GM12878 (cell line): ENCODE measurements at regions of chr17 and their contacts with region 1.

Region 1: GRCh38 chr17:82320956-82321927 is 3.8 kb upstream of the CD7 start:
- DNase-seq: no peak
- ATAC-seq: peak; percentile 88
- H3K4me3 ChIP-seq: peak overlapping the region; percentile 41; the same call in 1 of the 2 replicates
- H3K27ac ChIP-seq: no peak overlapping the region
- H3K4me1 ChIP-seq: no peaks in the 10 kb centered on the region; the same call in 1 of the 2 replicates
- H3K27me3 ChIP-seq: no peaks in the 10 kb centered on the region; a peak in 1 of 4 replicates
- CTCF ChIP-seq: peak; percentile 66 to 78 (median 77)
- EP300 ChIP-seq: no peak
- POLR2A ChIP-seq: no peak
- RAD21 ChIP-seq: peak; percentile 66

Region 2: GRCh38 chr17:81840826-81841778 is 480.1 kb before region 1 on chr17:
- CTCF ChIA-PET with region 1: no interaction called
- POLR2A ChIA-PET with region 1: no interaction called
- RAD21 ChIA-PET with region 1: no interaction called
- SMC1A ChIA-PET with region 1: no interaction called
- in situ Hi-C with region 1: no loop called
- intact Hi-C with region 1: no loop called
- DNase-seq: no peak
- ATAC-seq: no peak
- H3K4me3 ChIP-seq: no peak overlapping the region
- H3K27ac ChIP-seq: no peak overlapping the region
- H3K4me1 ChIP-seq: no peaks in the 10 kb centered on the region
- H3K27me3 ChIP-seq: no peaks in the 10 kb centered on the region
- CTCF ChIP-seq: no peak
- EP300 ChIP-seq: no peak
- POLR2A ChIP-seq: no peak
- RAD21 ChIP-seq: no peak

Region 3: GRCh38 chr17:82153745-82154375 is 167.4 kb before region 1 on chr17:
- CTCF ChIA-PET with region 1: no interaction called
- POLR2A ChIA-PET with region 1: no interaction called
- RAD21 ChIA-PET with region 1: no interaction called
- SMC1A ChIA-PET with region 1: no interaction called
- in situ Hi-C with region 1: no loop called
- intact Hi-C with region 1: no loop called
- DNase-seq: no peak
- ATAC-seq: peak; percentile 99
- H3K4me3 ChIP-seq: no peak overlapping the region
- H3K27ac ChIP-seq: no peak overlapping the region
- H3K4me1 ChIP-seq: no peaks in the 10 kb centered on the region
- H3K27me3 ChIP-seq: no peaks in the 10 kb centered on the region
- CTCF ChIP-seq: peak; percentile 86 to 93 (median 91)
- EP300 ChIP-seq: no peak
- POLR2A ChIP-seq: no peak
- RAD21 ChIP-seq: peak; percentile 95

Region 4: GRCh38 chr17:82205719-82206508 is 115.3 kb before region 1 on chr17:
- CTCF ChIA-PET with region 1: interaction called, 10 read pairs
- POLR2A ChIA-PET with region 1: interaction called, 3 read pairs
- RAD21 ChIA-PET with region 1: interaction called, 7 read pairs
- SMC1A ChIA-PET with region 1: interaction called, 5 read pairs
- in situ Hi-C with region 1: no loop called
- intact Hi-C with region 1: loop called (anchors 2 kb)
- DNase-seq: no peak
- ATAC-seq: peak; percentile 96
- H3K4me3 ChIP-seq: peak overlapping the region; percentile 38; the same call in 1 of the 2 replicates
- H3K27ac ChIP-seq: peak overlapping the region; percentile 78
- H3K4me1 ChIP-seq: peaks cover 9% of the 10 kb centered on the region
- H3K27me3 ChIP-seq: no peaks in the 10 kb centered on the region
- CTCF ChIP-seq: peak; percentile 96 to 97 (median 97)
- EP300 ChIP-seq: no peak
- POLR2A ChIP-seq: peak; percentile 97
- RAD21 ChIP-seq: peak; percentile 67

Region 5: DNA sequence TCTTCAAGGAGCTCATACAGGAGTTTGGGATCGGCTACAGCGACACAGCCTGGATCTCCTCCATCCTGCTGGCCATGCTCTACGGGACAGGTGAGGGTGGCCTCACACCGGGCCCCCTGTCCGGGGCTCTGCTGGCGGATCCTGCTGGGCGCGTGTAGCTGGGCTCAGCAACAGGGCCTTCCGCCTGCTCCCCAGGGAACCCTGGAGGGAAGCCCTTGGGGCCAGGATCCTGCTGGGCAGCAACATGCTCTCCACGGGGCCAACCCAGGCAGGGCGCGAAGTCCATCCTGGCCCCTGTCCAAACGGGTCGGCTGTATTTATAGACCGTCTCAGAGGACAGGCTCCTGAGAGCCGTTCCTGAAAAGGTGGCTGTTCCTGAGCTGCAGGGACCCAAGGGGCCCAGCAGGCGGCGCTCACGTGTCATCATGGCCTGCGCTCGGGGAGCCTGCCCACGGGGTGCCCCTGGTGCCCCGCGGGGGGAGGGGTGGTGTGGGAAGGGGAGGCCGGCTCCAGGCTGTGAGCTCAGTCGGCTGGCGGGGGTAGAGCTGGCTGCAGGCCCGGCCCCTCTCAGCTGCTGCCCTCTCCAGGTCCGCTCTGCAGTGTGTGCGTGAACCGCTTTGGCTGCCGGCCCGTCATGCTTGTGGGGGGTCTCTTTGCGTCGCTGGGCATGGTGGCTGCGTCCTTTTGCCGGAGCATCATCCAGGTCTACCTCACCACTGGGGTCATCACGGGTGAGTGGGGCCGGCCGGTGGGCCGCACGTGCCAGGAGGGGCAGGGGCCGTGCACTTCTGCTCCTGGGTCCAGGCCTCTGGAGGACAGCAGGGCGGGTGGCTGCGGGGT is 84.9 kb before region 1 on chr17:
- CTCF ChIA-PET with region 1: interaction called, 15 read pairs
- POLR2A ChIA-PET with region 1: no interaction called
- RAD21 ChIA-PET with region 1: interaction called, 10 read pairs
- SMC1A ChIA-PET with region 1: interaction called, 6 read pairs
- in situ Hi-C with region 1: no loop called
- intact Hi-C with region 1: no loop called
- DNase-seq: no peak
- ATAC-seq: peak; percentile 41
- H3K4me3 ChIP-seq: no peak overlapping the region
- H3K27ac ChIP-seq: no peak overlapping the region
- H3K4me1 ChIP-seq: peaks cover 64% of the 10 kb centered on the region
- H3K27me3 ChIP-seq: no peaks in the 10 kb centered on the region
- CTCF ChIP-seq: peak; percentile 74 to 91 (median 78)
- EP300 ChIP-seq: no peak
- POLR2A ChIP-seq: no peak
- RAD21 ChIP-seq: peak; percentile 71

Region 6: DNA sequence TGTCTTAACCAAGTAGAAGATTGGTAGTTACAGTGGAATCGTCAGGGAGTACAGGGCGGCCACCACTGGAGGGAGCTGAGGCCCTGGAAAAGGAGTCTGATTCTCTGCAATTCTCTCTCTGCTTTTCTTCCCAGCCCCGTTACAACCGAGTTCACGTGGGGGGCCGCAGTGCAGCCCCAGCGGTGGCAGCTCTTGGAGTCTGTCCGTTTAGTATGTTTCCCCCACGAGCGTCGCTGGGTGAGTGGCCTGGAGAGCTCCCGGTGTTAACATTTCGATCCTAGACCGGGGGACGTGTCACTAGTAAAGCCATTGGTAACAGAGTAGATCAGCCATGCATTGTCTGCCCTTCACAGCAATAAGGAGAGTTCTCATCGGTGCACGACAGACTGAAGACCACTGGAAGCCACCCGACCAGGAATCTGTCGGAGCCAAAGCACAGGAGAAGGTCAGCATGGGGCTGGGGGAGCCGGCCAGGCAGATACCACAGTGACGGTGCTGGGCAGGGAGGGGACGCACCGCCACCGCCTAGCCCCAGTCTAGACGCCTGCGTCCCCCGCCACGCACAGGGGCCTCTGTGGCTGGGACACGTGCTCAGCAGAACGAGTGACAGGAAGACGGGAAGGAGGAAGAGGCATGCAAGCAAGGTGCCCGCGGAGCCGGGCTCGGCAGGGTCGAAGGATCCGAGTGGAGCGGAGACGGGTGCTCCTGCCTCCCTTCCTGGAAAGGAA is 76.7 kb before region 1 on chr17:
- CTCF ChIA-PET with region 1: interaction called, 13 read pairs
- POLR2A ChIA-PET with region 1: no interaction called
- RAD21 ChIA-PET with region 1: interaction called, 10 read pairs
- SMC1A ChIA-PET with region 1: interaction called, 5 read pairs
- in situ Hi-C with region 1: no loop called
- intact Hi-C with region 1: loop called (anchors 1 kb)
- DNase-seq: no peak
- ATAC-seq: no peak
- H3K4me3 ChIP-seq: no peak overlapping the region
- H3K27ac ChIP-seq: no peak overlapping the region
- H3K4me1 ChIP-seq: peaks cover 14% of the 10 kb centered on the region
- H3K27me3 ChIP-seq: no peaks in the 10 kb centered on the region
- CTCF ChIP-seq: peak; percentile 46; a peak in 4 of 6 replicates
- EP300 ChIP-seq: no peak
- POLR2A ChIP-seq: peak; percentile 68
- RAD21 ChIP-seq: no peak; the same call in 1 of the 2 replicates

Region 7: GRCh38 chr17:82358465-82359350 is 37.5 kb after region 1 on chr17 and contains the start of gene TEX19:
- CTCF ChIA-PET with region 1: no interaction called
- POLR2A ChIA-PET with region 1: no interaction called
- RAD21 ChIA-PET with region 1: no interaction called
- SMC1A ChIA-PET with region 1: no interaction called
- in situ Hi-C with region 1: no loop called
- intact Hi-C with region 1: no loop called
- DNase-seq: no peak
- ATAC-seq: peak; percentile 67
- H3K4me3 ChIP-seq: no peak within 1 kb of the TSS
- H3K27ac ChIP-seq: no peak within 1 kb of the TSS
- H3K4me1 ChIP-seq: peaks cover 4% of the 10 kb centered on the region; the same call in 1 of the 2 replicates
- H3K27me3 ChIP-seq: no peaks in the 10 kb centered on the region
- CTCF ChIP-seq: peak in 1 of 3 experiments; percentile 10; a peak in 1 of 6 replicates
- EP300 ChIP-seq: no peak
- POLR2A ChIP-seq: no peak
- RAD21 ChIP-seq: no peak
- polyA plus RNA-seq, gene TEX19: 0.03 TPM in 1 of 2 experiments, not detected in the other